ENCODE measurements at regions of chr5 and their contacts with region 1.

Region 1: DNA sequence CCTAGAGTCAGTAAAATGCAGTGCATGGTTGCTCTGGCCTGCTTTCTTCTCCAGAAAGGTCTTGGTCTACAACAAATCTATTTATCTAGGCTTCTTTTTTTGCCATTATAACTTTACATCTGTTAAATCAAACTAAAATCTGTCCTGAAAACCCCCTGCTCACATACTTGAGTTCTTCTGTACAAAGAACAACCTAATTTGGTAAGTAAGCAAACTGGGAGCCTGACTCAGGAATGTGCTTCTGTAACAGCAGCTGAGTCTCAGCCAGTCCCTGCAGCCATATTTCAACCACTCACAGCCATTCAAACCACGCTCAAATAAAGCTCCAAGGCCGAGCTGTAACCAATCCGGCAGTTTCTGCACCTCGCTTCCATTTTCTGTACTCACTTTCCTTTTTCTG is 95.8 kb downstream of the PLPP1 start:
- DNase-seq: no peak
- ATAC-seq: no peak
- H3K4me3 Mint-ChIP-seq: no peak overlapping the region
- H3K27ac Mint-ChIP-seq: no peak overlapping the region
- H3K4me1 Mint-ChIP-seq: peaks cover 46% of the 10 kb centered on the region
- H3K27me3 Mint-ChIP-seq: no peaks in the 10 kb centered on the region

Region 2: GRCh38 chr5:55364537-55365055 is 74.4 kb before region 1 on chr5:
- CTCF ChIA-PET with region 1: no interaction called
- POLR2A ChIA-PET with region 1: no interaction called
- intact Hi-C with region 1: loop called in 1 of 2 experiments (anchors 5 kb)
- DNase-seq: peak; percentile 31
- ATAC-seq: peak; percentile 94
- H3K4me3 Mint-ChIP-seq: peak overlapping the region; percentile 2
- H3K27ac Mint-ChIP-seq: peak overlapping the region; percentile 69
- H3K4me1 Mint-ChIP-seq: peaks cover 22% of the 10 kb centered on the region
- H3K27me3 Mint-ChIP-seq: no peaks in the 10 kb centered on the region

Region 3: DNA sequence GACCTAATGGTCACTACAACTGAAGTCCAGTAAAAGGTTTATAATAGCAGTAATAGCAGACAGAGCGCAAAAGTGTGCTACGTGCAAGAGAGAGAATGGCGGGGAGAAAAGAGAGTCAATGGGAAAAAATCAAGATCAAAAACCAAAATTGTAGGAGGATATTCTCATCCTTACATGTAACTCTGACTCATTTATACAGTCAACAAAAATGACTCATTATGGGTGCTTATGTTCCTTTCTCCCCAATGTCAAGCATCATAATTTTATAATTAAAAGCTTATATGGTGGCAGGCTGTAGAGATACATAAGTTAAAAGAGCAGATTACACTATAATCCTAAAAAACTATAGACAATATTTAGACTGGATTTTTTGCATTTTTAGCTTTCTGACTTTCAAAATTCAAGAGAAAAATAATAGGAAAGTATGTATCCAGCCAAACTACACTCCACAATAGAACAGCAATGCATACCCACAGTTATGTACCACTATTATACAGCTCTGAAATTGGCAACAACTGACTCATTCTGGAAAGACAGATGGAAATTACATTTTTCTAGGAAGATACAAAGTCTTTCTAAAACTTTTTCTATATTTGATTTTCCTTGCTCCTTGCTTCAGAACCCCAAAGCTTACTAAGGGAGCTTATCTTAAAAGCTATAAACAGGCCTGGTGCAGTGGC is 17.3 kb after region 1 on chr5:
- CTCF ChIA-PET with region 1: interaction called, 3 read pairs
- POLR2A ChIA-PET with region 1: no interaction called
- intact Hi-C with region 1: loop called in 1 of 2 experiments (anchors 1 kb)
- DNase-seq: no peak
- ATAC-seq: peak; percentile 74
- H3K4me3 Mint-ChIP-seq: no peak overlapping the region
- H3K27ac Mint-ChIP-seq: no peak overlapping the region
- H3K4me1 Mint-ChIP-seq: peaks cover 8% of the 10 kb centered on the region
- H3K27me3 Mint-ChIP-seq: no peaks in the 10 kb centered on the region

Region 4: DNA sequence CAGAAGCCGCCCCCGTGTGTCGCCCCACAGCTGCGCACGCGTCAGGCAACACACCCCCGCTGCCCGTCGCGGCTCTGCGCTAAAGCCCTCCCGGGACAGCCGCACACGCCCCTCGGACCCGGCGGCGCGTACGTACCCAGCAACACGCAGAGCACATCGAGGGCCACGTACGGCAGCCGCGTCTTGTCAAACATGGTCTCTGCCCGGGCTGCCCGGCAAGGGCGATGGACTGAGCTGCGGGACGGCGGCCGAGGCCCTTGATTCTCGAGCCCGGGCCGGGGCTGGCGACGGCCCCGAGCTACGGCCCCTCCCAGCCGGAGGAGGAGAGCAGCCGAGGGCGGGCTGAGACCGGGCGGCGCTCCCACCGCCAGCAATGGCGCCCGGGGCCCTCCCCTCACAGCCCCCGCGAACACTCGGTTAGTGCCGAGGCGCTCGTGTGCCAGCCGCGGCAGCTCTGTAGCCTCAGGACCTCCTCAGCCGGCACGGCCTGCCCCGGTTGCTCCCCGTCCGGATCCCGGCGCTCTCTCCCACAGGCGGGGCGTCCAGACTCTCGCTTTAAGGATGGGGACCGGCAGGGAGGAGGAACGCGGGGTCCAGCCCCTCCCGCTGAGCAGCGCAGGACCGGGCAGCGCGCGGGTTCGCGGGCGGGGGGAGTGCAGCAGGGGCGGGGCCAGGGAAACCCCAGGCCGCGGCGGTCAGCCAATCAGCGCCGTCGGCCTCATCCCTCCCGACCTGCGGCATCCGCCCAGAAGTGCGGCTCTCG is 95.6 kb after region 1 on chr5 and contains the start of gene PLPP1:
- CTCF ChIA-PET with region 1: no interaction called
- POLR2A ChIA-PET with region 1: no interaction called
- intact Hi-C with region 1: loop called in 1 of 2 experiments (anchors 5 kb)
- DNase-seq: peak; percentile 91
- ATAC-seq: peak; percentile 89
- H3K4me3 Mint-ChIP-seq: peak within 1 kb of the TSS; percentile 79
- H3K27ac Mint-ChIP-seq: peak within 1 kb of the TSS; percentile 88
- H3K4me1 Mint-ChIP-seq: peaks cover 27% of the 10 kb centered on the region
- H3K27me3 Mint-ChIP-seq: no peaks in the 10 kb centered on the region
- total RNA-seq, gene PLPP1: 7.9 to 8.2 TPM

Region 5: DNA sequence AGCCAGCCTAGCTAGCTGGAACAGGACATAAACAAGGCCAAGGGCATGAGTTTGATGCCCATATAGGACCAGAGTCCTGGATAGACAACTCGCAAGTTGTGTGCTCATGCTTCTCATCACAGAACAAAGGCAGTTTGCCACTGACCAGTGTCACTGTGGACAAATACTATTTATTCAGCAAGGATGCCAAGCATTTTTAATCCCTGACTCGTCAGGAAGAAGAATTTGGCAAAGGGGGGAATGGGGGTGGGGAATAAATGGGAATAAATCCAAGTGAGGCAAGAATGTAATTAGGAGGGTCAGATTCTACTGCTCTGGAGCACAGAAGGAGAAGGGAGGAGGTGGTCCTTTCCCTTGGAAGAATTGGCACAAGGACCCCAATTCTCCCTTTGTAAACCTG is 841.0 kb after region 1 on chr5:
- CTCF ChIA-PET with region 1: no interaction called
- POLR2A ChIA-PET with region 1: no interaction called
- intact Hi-C with region 1: no loop called
- DNase-seq: no peak
- ATAC-seq: no peak
- H3K4me3 Mint-ChIP-seq: no peak overlapping the region
- H3K27ac Mint-ChIP-seq: no peak overlapping the region
- H3K4me1 Mint-ChIP-seq: no peaks in the 10 kb centered on the region
- H3K27me3 Mint-ChIP-seq: no peaks in the 10 kb centered on the region

Measured in activated CD4-positive, alpha-beta T cell treated with anti-CD3 and anti-CD28 coated beads for 36 hours (primary cell).